Heart right ventricle (tissue), 16 donors: ENCODE measurements at regions of chr13 and their contacts with region 1.

Region 1: GRCh38 chr13:35953537-35954206 is 177.5 kb downstream of the DCLK1 start:
- DNase-seq: peak; percentile 60 to 90
- ATAC-seq: peak; percentile 89 to 96 (median 94)
- H3K4me3 ChIP-seq: peak overlapping the region in 4 of 10 donors; percentile 12 to 23 (median 18)
- H3K27ac ChIP-seq: peak overlapping the region in 8 of 10 donors; percentile 5 to 57 (median 37)
- H3K4me1 ChIP-seq: peaks cover 0 to 31% (median 15%) of the 10 kb centered on the region in 9 donors
- H3K27me3 ChIP-seq: no peaks in the 10 kb centered on the region
- CTCF ChIP-seq: peak; percentile 37 to 86 (median 66)

Region 2: DNA sequence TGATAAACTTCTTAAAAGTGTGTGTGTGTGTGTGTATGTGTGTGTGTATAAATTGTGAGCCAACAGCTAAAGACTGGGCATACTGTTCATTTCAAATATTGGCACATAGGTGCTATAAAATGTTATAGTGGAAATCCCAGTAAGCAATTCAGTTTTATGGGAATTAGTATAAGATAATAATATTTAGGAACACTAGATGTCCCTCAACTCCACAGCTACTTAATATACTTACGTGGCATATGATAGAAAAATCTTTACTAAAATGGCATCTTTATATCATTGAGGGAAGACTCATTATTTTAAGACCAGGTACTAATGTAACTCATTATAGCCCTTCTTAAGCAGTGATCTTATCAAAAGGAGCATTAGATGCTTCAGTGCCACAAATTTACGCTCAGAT is 743.4 kb before region 1 on chr13:
- intact Hi-C with region 1: loop called in 1 of 10 experiments (anchors 10 kb)
- DNase-seq: no peak
- ATAC-seq: no peak
- H3K4me3 ChIP-seq: no peak overlapping the region
- H3K27ac ChIP-seq: no peak overlapping the region
- H3K4me1 ChIP-seq: peaks cover 0 to 7% (median 0%) of the 10 kb centered on the region in 9 donors
- H3K27me3 ChIP-seq: no peaks in the 10 kb centered on the region
- CTCF ChIP-seq: peak in 5 of 9 donors; percentile 8 to 31 (median 24)

Region 3: DNA sequence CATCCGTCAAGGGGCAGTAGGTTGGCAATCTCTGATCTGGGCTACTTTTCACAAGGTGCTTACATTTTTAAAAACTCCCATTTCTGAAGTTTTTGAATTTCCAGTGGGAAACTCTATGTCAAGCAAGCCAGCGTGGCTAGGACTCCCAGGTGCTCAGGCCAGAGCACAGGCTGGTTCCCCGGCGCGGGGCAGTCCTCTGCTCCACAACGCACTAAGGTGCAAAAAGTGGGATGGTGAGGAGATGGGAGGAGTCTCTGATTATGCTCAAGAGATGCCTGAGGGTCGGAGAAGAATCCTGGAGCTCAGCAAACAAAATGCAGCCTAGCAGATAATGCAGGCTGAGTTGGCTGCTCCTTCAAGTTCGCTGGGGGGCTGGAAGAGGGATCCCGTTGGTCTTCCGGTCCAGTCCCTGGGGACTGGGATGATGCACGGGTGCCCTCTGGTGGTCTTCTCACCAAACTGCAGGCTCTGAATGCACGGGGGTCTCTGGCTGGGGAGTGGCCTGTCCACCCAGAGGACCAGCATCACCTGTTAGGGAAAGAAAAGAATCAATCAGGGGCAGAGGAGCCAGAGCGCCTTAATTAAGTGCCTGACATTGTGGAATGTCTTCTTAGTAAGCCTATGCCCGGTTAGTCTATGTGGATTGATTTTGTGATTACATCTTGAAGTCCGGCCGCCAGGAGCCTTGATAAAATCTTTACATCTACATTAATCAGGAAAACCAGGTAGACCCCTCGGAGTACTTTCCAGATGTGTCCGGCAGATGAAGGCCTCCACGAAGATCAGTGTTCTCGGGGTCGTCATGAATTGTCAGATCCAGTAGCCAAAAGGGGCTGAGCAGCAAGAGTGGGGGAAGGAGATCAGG is 232.8 kb before region 1 on chr13:
- intact Hi-C with region 1: loop called in 3 of 10 experiments (anchors 5 to 10 kb)
- DNase-seq: peak; percentile 35 to 56
- ATAC-seq: peak in 4 of 8 donors; percentile 25 to 57 (median 42)
- H3K4me3 ChIP-seq: peak overlapping the region in 5 of 10 donors; percentile 7 to 20 (median 13)
- H3K27ac ChIP-seq: peak overlapping the region in 3 of 10 donors; percentile 13 to 40 (median 26)
- H3K4me1 ChIP-seq: peaks cover 3 to 46% (median 34%) of the 10 kb centered on the region in 9 donors
- H3K27me3 ChIP-seq: no peaks in the 10 kb centered on the region
- CTCF ChIP-seq: peak; percentile 76 to 92 (median 87)

Region 4: DNA sequence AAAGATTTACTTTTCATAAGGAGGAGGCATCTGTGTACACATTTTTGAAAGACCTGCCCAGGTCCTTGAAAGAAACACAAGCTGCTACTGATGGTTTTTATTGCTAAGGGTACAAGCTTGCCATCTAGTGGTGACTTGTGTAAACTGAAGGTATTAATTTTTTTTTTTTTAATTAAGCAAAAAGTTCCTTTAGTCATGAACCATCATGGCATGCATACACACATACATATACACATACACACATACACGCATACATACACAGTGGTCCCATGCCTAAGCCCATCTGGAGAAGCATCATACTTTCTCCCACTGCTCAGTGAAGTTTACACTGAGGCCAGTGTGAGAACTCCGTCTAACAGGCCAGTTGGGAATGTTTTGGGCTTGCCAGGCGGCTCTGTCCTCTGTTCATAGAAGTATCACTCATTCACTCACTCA is 135.0 kb before region 1 on chr13:
- intact Hi-C with region 1: loop called in 8 of 10 experiments (anchors 5 to 10 kb)
- DNase-seq: no peak
- ATAC-seq: peak in 6 of 8 donors; percentile 33 to 64 (median 38)
- H3K4me3 ChIP-seq: no peak overlapping the region
- H3K27ac ChIP-seq: no peak overlapping the region
- H3K4me1 ChIP-seq: peaks cover 0 to 7% (median 0%) of the 10 kb centered on the region in 9 donors
- H3K27me3 ChIP-seq: no peaks in the 10 kb centered on the region
- CTCF ChIP-seq: peak; percentile 62 to 81 (median 74)

Region 5: GRCh38 chr13:35874704-35875103 is 79.0 kb before region 1 on chr13:
- intact Hi-C with region 1: loop called in 3 of 10 experiments (anchors 5 to 10 kb)
- DNase-seq: peak; percentile 60 to 63
- ATAC-seq: peak; percentile 72 to 93 (median 88)
- H3K4me3 ChIP-seq: no peak overlapping the region
- H3K27ac ChIP-seq: peak overlapping the region in 9 of 10 donors; percentile 8 to 76 (median 62)
- H3K4me1 ChIP-seq: peaks cover 0 to 31% (median 11%) of the 10 kb centered on the region in 9 donors
- H3K27me3 ChIP-seq: no peaks in the 10 kb centered on the region
- CTCF ChIP-seq: no peak